AG04450 (cell line): ENCODE measurements at regions of chr19 and their contacts with region 1.

Region 1: DNA sequence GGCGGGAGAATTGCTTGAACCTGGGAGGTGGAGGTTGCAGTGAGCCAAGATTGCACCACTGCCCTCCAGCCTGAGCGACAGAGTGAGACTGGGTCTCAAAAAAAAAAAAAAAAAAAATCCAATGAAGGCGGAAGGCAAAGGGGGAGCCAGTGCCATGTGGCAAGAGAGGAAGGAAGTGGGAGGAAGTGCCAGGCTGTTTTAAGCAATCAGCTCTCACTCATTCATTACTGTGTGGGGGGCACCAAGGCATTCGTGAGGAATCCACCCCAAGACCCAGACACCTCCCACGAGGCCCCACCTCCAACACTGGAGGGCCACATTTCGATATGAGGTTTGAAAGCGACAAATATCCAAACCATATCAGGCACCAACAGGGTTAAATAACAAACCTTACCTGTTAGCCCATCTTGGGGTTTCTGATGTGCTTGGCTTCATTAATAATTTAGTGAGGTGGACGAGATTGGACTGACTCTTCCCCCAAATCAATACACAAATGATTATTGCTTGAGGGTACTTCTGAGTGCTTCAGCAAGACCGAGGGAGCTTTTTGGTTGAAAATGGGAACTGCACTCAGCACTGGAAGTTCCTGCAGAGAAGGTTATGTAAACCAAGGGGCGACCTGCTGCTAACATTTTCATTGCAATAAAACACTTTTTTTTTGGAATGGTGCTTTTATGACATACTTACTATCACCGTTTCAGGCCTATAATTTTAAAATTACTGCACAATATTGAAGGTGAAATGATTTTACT is 7.5 kb upstream of the LRP3 start:
- DNase-seq: no peak
- H3K4me3 ChIP-seq: no peak overlapping the region
- H3K27ac ChIP-seq: no peak overlapping the region
- H3K27me3 ChIP-seq: peaks cover 12% of the 10 kb centered on the region
- CTCF ChIP-seq: no peak

Region 2: DNA sequence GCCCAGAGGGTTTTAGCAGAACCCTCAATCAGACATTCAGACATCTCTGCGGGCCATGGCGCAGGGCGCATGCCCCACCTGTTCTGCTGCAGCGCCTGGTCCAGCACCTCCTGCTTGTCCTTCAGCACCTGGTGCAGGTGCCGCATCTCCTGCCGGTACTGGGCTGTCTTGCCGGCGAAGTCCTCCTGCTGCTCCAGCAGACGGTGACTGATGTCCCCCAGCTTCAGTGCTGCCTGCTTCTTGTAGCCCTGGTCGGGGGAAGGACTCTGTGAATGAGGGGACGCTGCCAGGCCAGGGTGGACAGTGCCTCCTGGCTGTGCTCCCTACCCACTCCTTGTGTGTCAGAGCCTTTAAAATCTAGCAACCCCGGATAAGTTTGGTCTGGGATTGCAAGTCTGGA is 304.8 kb before region 1 on chr19:
- CTCF ChIA-PET with region 1: no interaction called
- POLR2A ChIA-PET with region 1: no interaction called
- DNase-seq: no peak
- H3K4me3 ChIP-seq: no peak overlapping the region
- H3K27ac ChIP-seq: no peak overlapping the region
- H3K27me3 ChIP-seq: no peaks in the 10 kb centered on the region
- CTCF ChIP-seq: no peak

Region 3: GRCh38 chr19:33098023-33098652 is 88.5 kb before region 1 on chr19:
- CTCF ChIA-PET with region 1: no interaction called
- POLR2A ChIA-PET with region 1: no interaction called
- DNase-seq: no peak
- H3K4me3 ChIP-seq: no peak overlapping the region
- H3K27ac ChIP-seq: no peak overlapping the region
- H3K27me3 ChIP-seq: no peaks in the 10 kb centered on the region
- CTCF ChIP-seq: no peak

Region 4: DNA sequence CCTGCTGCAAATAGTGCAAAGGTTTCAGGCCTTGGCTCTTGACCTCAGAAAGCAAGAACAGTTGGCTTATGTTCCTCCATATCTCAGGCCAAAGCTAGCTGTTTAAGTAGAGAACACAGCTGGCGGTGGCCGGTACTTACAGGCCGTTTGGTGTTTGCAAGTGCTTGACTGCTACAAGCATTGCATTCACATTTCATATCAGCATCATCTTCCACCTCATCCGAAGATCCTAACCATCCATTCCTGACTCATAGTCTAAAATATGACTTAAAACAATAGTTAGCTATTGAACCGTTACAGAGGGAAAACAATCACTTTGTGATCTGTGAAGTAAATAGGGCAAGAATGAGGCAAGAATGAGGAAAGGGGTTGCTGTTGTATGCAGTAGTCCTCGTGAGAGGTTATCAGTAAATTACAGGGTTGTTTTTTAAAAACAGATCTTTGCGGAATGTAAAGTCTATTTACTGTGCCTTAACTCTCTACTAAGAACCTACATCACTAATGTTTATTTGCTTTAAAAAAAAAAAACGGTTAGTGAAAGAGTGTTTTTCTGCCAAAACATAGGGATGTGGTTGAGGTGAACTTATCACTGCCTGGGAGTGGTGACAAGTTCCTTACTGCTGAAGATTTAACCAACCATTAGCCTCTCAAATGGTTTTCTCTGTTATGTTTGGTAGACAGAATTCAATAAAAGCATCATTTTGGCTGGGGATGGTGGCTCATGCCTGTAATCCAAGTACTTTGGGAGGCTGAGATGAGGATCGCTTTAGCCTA is 76.3 kb before region 1 on chr19:
- CTCF ChIA-PET with region 1: interaction called, 10 read pairs
- POLR2A ChIA-PET with region 1: no interaction called
- DNase-seq: peak; percentile 44
- H3K4me3 ChIP-seq: no peak overlapping the region
- H3K27ac ChIP-seq: peak overlapping the region; percentile 78
- H3K27me3 ChIP-seq: no peaks in the 10 kb centered on the region
- CTCF ChIP-seq: no peak

Region 5: GRCh38 chr19:33132425-33132824 is 54.2 kb before region 1 on chr19:
- CTCF ChIA-PET with region 1: interaction called, 98 read pairs
- POLR2A ChIA-PET with region 1: no interaction called
- DNase-seq: no peak
- H3K4me3 ChIP-seq: no peak overlapping the region
- H3K27ac ChIP-seq: no peak overlapping the region
- H3K27me3 ChIP-seq: no peaks in the 10 kb centered on the region
- CTCF ChIP-seq: peak; percentile 23

Region 6: DNA sequence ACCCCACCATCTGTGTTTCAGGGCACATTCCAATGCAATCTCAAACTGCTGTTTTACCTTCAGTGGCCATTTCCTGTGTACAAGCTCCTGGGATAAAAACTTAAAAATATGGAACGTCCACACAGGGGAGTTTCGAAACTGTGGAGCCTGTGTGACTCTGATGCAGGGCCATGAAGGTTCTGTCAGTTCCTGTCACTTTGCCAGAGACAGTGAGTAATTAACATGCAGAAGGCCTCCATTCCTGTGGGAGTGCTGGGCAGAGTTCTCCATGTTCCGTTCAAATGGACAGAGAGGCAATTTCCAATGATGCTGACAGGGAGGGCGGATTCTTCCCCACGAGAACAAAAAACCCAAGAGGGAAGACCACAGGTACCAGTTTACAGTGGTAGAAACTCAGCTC is 30.3 kb before region 1 on chr19:
- CTCF ChIA-PET with region 1: interaction called, 33 read pairs
- POLR2A ChIA-PET with region 1: no interaction called
- DNase-seq: no peak
- H3K4me3 ChIP-seq: no peak overlapping the region
- H3K27ac ChIP-seq: no peak overlapping the region
- H3K27me3 ChIP-seq: no peaks in the 10 kb centered on the region
- CTCF ChIP-seq: no peak

Region 7: DNA sequence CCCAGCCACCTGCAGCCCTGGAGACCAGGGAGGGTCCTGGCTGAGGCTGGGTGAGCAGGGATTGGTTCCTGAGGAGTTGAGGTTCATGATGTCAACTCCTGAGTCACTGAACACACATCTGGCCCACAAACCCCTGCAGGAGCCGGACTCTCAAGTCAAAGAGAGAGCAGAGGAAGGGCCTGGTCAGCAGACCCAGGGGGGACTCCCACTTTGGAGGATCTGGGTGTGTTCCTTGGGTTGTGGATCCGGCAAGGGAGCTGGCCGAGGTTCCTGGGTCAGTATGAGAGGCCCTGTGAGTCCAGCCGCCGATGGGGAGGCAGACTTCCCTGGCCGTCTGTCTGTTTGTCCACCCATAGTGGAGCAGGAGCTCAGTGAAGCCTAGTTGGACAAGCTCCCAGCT is 35.0 kb after region 1 on chr19:
- CTCF ChIA-PET with region 1: interaction called, 11 read pairs
- POLR2A ChIA-PET with region 1: no interaction called
- DNase-seq: no peak
- H3K4me3 ChIP-seq: no peak overlapping the region
- H3K27ac ChIP-seq: no peak overlapping the region
- H3K27me3 ChIP-seq: peaks cover 41% of the 10 kb centered on the region
- CTCF ChIP-seq: no peak